Cardiac septum (tissue), 1 donor: ENCODE measurements at regions of chr10 and their contacts with region 1.

Region 1: DNA sequence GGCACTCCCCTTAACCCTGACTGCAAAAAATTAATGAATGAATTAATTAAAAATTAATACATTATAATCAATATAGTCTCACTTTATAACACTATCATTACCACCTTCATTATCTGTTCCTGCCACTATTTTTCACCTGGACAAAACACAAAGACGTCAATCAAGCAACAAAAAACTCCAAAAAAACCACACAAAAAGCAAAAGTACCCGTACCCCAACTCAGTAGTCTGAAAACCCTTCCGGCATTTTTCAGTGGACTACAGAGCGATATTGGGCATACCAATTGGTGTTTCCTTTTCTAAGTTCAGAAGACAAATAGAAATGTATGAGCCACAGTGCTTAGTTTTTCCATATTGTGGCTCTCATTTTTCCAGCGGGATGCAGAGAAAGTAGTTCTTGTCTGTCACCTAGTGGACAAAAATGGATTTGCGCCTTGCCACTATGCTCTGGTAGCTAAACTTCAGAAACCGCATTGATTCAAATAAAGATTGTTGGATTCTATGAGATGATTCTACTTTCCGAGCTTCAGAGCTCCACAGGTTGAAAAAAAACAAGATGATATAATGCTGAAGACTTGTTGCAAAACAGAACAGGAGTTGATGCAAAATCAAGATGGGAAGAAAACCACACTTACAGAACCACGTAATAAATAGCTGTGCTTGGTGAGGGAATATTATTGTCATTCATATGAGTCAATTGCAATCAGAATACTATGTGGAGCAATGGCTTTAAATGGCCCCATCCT is 50.6 kb upstream of the ITGB1 start:
- DNase-seq: no peak

Region 2: DNA sequence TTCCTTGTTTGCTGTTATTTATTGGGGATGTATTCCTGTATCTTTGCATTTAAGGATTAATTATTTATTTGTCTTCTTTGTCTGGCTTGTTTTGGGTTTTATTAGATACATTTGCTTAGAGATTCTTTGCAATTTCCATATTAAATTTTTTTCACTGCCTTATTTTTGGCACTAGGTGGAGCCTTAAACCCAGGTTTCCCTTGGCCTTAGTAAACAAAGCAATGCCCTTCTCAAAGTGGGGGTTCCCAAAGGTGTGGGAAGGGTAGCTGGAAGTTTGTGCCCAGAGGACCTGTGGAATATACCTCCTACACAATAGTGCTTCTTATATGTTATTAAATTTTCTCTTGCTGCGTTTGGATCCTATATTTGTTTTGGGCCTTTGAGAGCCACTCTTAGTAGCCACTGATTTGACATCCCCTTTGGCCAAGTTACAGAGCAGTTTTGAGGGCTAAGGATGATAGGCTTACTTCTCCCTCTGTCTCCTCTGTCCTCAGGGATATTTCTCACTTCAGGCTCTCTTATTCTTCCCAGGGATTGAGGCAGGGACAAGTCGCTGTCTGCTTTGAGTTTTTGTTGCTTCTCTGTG is 213.0 kb before region 1 on chr10:
- intact Hi-C with region 1: loop called (anchors 1 kb)
- DNase-seq: no peak

Region 3: GRCh38 chr10:32893431-32893830 is 115.2 kb before region 1 on chr10:
- intact Hi-C with region 1: loop called (anchors 10 kb)
- DNase-seq: no peak

Region 4: DNA sequence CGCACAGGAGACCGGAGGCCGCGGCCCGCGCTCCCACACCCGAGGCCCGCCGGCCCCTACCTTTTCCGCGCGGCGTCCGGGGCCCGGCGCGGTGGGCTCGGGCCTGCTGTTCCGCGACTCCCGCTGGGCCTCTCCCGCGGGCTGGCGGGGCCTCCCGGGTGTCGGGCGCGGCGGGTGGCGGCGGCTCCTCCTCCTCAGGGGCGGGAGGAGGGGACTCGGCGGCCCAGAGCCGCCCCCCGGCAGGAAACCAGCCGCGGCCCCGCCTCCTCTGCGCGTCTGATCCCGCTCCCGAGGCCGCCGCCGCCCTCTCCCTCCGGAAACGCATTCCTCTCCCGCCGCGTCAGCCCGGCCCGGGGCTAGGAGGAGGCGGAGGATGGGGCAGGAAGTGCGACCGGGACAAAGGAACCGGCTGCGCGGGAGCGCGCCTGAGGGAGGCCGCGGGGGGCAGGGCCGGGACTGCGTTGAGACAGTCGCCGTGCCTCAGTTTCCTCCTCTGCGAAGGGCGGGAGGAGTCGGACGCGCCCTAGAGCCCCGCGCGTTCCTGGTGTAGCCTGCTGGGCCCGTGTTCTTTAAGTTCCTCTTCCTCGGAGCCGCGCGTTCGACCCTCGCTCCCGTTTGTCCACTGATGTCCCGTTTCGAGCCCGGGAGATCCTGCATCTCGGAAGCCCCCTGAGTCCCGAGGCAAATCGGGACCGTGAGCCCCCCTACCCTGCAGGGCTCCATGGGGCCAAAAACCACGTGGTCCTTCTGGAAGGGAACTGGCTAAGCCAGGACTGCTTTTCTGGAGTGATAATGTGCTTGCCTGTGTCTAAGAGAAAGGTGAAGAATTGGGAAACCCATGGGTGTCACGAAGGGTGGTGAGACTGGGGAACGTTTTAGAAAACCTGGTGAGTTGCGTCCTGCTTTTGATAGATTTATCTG is 50.3 kb before region 1 on chr10 and contains the start of gene ITGB1:
- intact Hi-C with region 1: loop called (anchors 2 kb)
- DNase-seq: peak; percentile 98
- total RNA-seq, gene ITGB1: 715 TPM

Region 5: DNA sequence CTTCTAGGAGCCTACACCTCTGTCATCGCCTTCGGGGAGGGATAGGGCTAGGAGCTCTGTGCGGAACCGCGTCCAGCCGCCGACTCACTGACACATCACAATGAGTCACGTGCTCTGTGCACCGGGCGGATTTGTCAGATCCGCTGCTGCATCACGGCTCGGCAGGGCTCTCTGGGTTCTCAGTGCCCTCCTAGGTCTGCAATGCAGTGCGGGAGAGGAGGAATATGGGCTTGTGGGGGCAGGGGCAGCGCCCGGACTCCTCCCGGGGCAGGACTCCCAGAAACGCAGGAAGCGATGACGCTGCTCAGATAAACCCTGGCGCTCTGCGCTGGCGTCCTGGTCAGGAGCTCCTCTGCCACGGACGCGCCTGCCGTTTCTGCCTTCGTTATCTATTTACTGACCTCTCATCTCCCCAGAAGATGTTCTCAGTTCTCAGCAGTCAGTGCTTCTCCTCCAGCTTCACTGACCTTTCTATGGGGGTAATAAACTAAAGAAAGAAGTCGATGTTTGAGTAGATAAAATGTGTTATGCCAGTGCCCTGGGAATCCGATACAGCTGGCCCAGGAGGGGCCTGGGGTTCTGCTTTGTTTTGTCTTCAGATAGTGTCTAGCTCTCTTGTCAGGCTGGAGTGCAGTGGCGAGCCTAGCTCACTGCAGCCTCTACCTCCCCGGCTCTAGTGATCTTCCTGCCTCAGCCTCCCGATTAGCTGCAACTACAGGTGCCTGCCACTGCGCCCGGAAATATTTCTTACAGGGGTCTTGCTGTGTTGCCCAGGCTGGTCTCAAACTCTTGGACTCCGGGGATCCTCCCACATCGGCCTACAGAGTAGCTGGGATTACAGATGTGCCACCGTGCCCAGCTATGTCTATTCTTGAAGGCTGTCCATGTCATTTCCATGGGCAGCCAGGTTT is 27.9 kb before region 1 on chr10:
- intact Hi-C with region 1: loop called (anchors 2 kb)
- DNase-seq: peak; percentile 95

Region 6: DNA sequence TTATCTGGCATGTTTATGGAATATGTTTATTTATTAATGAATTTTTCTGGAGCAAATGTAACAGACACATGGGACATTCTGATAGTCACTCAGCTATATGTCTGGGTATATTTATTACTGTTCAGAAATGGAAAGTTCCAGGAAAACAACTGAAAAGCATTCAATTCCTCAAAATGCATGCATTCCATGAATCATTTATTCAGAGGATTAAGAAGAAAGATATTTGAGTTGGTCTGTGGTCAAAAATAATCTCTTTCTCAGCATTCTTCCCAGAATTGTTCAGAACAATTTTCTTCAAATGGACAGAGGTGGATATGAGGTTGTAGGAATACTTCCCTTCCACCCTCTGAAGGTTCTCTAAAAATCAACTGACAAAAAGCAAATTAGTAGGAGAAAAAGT is 47.0 kb after region 1 on chr10:
- intact Hi-C with region 1: no loop called
- DNase-seq: no peak

Region 7: GRCh38 chr10:33114451-33114944 is 105.8 kb after region 1 on chr10:
- intact Hi-C with region 1: no loop called
- DNase-seq: no peak

Region 8: DNA sequence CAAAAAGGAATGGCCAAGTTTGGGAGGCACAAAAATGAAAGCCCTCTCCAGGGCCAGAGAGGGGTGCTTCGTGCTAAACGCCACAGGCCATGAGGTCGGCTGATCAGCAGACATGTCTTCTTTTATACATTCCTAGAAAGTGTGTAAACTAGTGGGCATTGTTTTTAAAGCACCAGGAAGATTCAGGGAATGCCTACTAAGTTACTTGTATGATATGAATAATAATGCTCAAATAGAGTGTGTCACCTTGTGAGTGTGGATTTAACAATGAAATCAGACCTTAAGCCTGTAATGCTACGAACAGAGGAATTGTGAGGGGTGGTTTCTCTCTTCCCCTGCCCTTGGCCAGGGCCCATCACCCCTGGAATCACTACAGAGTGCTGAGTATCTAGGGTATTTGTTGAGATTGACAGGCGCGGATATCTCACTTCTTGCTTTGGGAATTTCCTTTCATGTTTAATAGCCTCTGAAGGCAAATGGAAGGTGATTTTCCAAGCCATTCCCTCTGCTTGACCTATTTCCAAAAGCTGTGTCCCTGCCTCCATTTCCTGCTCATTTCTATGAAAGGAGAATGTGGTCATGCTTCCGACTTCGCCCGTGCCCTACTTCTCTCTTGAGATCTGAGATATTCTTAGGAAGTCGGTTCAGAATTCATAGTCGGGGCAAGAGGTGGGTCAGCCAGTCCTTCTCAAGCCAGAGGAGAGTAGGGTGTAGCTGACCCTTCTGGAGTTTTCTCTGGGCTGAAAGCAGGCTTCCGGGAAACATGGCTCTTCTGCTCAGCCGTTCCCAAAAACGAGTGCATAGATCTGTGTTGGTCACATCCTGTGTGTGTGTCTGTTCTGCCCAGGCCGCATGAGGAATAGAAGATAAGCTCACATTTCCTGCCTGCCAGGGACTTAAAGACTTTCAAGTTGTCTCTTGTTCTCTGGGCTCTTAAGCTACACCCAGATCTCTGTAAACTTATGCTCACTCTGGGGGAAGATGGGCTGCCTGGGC is 117.1 kb after region 1 on chr10:
- intact Hi-C with region 1: loop called (anchors 10 kb)
- DNase-seq: no peak